ENCODE measurements at regions of chr11 and their contacts with region 1.

Region 1: GRCh38 chr11:131674051-131674755 is 303.8 kb downstream of the NTM start:
- DNase-seq: peak; percentile 61 to 72 (median 67)
- ATAC-seq: peak; percentile 93 to 99 (median 96)
- H3K4me3 ChIP-seq: no peak overlapping the region
- H3K27ac ChIP-seq: no peak overlapping the region
- H3K4me1 ChIP-seq: no peaks in the 10 kb centered on the region
- H3K27me3 ChIP-seq: no peaks in the 10 kb centered on the region
- CTCF ChIP-seq: peak; percentile 78 to 96 (median 94)
- POLR2A ChIP-seq: no peak

Region 2: GRCh38 chr11:130924770-130925169 is 749.4 kb before region 1 on chr11:
- intact Hi-C with region 1: loop called in 1 of 2 experiments (anchors 10 kb)
- DNase-seq: no peak
- ATAC-seq: no peak
- H3K4me3 ChIP-seq: no peak overlapping the region
- H3K27ac ChIP-seq: no peak overlapping the region
- H3K4me1 ChIP-seq: no peaks in the 10 kb centered on the region
- H3K27me3 ChIP-seq: no peaks in the 10 kb centered on the region
- CTCF ChIP-seq: no peak
- POLR2A ChIP-seq: no peak

Region 3: GRCh38 chr11:131064373-131064991 is 609.7 kb before region 1 on chr11:
- intact Hi-C with region 1: loop called in 1 of 2 experiments (anchors 10 kb)
- DNase-seq: peak in 2 of 3 donors; percentile 42 to 49
- ATAC-seq: peak; percentile 57 to 69 (median 59)
- H3K4me3 ChIP-seq: no peak overlapping the region
- H3K27ac ChIP-seq: no peak overlapping the region
- H3K4me1 ChIP-seq: no peaks in the 10 kb centered on the region
- H3K27me3 ChIP-seq: no peaks in the 10 kb centered on the region
- CTCF ChIP-seq: peak; percentile 40 to 81 (median 64)
- POLR2A ChIP-seq: no peak

Measured in right lobe of liver (tissue), 6 donors.